ENCODE measurements at regions of chr1 and their contacts with region 1.

Region 1: DNA sequence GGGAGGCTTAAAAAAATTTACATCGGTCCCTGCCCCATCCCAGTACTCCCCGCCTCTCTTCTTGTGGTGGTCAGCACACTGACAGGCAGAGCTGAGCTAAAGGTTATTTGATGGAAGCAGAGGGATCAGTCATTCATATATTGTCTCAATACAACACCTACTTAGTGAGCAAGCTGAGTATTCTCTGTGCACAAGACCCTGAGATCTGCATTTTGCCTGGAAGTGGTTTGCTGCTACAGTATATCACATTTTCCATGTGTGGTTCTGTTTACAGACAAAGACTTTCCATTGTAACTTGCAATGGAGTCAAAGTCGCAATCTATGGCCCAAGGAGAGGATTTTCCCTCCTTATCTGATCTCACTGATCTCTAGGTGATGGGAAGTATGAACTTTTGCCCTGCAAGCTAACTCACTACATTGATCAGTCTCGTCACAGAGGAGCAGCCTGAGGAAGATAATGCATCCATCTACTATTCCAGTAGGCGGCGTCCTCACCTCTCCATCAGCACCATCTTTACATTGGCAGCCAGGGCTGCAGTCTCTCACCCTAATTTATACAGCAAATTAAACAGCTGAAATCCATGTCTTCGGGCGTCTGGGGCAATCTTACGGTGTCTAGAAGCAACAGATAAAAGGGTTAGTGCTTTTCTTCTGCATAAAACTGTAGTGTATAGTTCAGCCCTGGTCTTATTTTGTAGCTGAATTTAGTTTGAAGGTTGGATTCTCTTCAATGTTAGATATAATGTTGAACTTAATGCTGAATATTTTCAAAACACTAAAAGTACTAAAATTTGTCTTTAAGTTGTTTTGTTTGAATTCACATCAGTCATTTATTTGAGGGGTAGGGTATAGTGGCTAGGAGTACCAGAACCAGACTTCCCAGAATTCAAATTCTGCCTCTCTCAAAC is 3.2 kb upstream of the TRAF5 start:
- DNase-seq: no peak
- H3K4me3 ChIP-seq: no peak overlapping the region
- H3K27ac ChIP-seq: no peak overlapping the region
- H3K4me1 ChIP-seq: peaks cover 0 to 18% (median 13%) of the 10 kb centered on the region in 4 donors
- H3K27me3 ChIP-seq: no peaks in the 10 kb centered on the region
- CTCF ChIP-seq: peak; percentile 35 to 68 (median 64)
- EP300 ChIP-seq: no peak
- POLR2A ChIP-seq: no peak

Region 2: DNA sequence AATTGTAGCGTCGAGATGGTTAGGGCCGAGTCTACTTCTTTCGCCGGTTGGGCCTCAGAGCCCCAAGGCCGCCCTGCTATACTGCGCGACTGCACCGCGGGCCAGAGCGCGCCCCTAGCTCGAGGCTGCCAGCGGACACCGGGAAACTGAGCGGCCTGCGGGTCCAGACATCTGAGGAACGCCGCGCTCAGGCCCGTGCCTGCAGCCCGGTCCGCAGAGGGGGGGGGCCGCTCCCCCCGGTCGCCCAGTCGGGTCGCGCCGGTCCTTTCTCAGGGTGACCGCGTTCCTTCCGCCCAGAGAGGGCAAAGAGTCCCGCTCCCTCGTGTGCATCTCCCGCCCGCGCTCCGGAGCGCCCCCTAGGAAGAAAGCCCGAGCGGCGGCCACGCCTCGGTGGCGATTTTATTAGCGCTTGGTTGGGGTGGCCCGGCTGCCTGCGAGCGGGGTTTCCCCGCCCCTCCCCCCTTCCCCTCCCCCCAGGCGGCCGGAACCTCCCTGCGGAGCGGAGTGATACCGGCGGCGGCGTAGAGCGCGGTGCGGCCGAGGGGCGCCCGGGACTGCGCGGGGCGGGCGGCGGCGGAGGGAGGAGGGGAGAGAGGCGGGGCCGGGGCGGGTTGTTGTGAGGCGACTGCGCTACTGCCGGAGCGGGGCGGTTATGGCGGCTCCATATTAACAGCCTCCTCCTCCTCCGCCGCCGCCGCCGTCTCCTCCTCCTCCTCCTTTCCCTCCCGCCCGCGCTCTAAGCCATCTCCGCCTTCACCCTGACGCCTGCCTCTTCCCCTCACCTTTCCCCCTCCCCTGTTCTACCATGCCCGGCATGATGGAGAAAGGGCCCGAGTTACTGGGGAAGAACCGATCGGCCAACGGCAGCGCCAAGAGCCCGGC is 64.4 kb before region 1 on chr1 and contains the start of gene RCOR3:
- intact Hi-C with region 1: loop called (anchors 5 kb)
- DNase-seq: peak; percentile 97
- H3K4me3 ChIP-seq: peak within 1 kb of the TSS; percentile 75 to 99 (median 94)
- H3K27ac ChIP-seq: peak within 1 kb of the TSS; percentile 99 to 100 (median 100)
- H3K4me1 ChIP-seq: peaks cover 0 to 40% (median 32%) of the 10 kb centered on the region in 4 donors
- H3K27me3 ChIP-seq: no peaks in the 10 kb centered on the region
- CTCF ChIP-seq: peak in 1 of 4 experiments; percentile 47
- EP300 ChIP-seq: peak in 1 of 4 donors; percentile 12
- POLR2A ChIP-seq: peak; percentile 77 to 85
- total RNA-seq, gene RCOR3: 40.7 to 60.3 (median 55.7) TPM

Region 3: DNA sequence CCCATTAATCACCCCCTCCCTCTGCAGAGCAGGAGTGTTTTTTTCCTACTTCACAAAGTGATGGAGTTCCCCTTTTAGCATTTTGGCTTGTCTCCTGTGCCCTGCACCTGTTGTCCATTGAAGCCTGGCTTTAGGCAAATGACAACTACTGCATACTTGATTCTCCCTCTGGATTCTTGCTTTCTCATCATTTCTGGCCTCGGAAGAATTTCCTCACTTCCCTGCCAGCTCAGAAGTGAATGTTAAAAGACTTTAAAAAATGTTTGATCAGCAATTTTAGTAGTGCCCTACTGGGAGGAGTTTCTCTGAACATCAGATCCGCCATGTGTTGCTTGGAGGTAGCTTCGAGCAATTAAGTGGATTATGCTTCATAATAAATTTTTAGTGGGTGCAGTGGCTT is 36.2 kb before region 1 on chr1:
- intact Hi-C with region 1: no loop called
- DNase-seq: no peak
- H3K4me3 ChIP-seq: no peak overlapping the region
- H3K27ac ChIP-seq: no peak overlapping the region
- H3K4me1 ChIP-seq: peaks cover 0 to 5% (median 0%) of the 10 kb centered on the region in 4 donors
- H3K27me3 ChIP-seq: no peaks in the 10 kb centered on the region
- CTCF ChIP-seq: no peak
- EP300 ChIP-seq: no peak
- POLR2A ChIP-seq: no peak

Region 4: GRCh38 chr1:211382714-211383480 is 59.5 kb after region 1 on chr1:
- intact Hi-C with region 1: loop called (anchors 5 kb)
- DNase-seq: peak; percentile 96
- H3K4me3 ChIP-seq: peak overlapping the region; percentile 52 to 73 (median 64)
- H3K27ac ChIP-seq: peak overlapping the region; percentile 83 to 97 (median 90)
- H3K4me1 ChIP-seq: peaks cover 0 to 6% (median 0%) of the 10 kb centered on the region in 4 donors
- H3K27me3 ChIP-seq: no peaks in the 10 kb centered on the region
- CTCF ChIP-seq: no peak
- EP300 ChIP-seq: no peak
- POLR2A ChIP-seq: peak; percentile 82 to 95

Region 5: DNA sequence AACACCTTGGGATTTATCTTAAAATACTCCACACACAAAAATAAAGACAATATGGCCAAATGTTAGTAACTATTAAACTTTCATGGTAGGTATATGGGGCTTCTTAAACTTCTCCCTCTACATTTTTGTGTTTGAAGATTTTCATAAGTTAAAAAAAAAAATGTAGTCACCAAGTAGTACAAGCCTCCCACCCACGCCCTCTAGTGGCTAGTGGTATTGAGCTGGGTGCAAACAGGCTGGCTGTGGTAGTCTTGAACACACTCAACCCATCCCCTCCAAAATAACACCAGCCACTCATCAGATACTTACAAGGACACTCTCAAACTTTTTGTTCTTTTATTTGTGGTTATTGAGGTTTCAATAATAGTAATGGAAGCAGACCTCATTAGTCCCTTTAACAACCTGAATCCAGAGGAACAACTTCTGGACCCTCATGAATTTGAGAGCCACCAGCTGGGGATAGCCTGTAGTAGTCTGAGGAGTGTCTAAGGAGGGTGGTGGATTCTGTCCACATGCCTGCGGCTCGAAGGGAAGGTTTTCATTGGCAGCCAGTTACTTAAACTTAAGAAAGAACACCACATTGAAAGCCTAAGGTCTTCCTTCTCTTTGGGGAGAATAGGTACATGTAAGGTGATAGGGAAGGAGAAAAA is 152.9 kb after region 1 on chr1:
- intact Hi-C with region 1: loop called (anchors 10 kb)
- DNase-seq: peak; percentile 78
- H3K4me3 ChIP-seq: no peak overlapping the region
- H3K27ac ChIP-seq: no peak overlapping the region
- H3K4me1 ChIP-seq: peaks cover 0 to 12% (median 10%) of the 10 kb centered on the region in 4 donors
- H3K27me3 ChIP-seq: peaks cover 8 to 36% (median 18%) of the 10 kb centered on the region in 3 donors
- CTCF ChIP-seq: peak; percentile 4 to 72 (median 53)
- EP300 ChIP-seq: no peak
- POLR2A ChIP-seq: no peak

Region 6: DNA sequence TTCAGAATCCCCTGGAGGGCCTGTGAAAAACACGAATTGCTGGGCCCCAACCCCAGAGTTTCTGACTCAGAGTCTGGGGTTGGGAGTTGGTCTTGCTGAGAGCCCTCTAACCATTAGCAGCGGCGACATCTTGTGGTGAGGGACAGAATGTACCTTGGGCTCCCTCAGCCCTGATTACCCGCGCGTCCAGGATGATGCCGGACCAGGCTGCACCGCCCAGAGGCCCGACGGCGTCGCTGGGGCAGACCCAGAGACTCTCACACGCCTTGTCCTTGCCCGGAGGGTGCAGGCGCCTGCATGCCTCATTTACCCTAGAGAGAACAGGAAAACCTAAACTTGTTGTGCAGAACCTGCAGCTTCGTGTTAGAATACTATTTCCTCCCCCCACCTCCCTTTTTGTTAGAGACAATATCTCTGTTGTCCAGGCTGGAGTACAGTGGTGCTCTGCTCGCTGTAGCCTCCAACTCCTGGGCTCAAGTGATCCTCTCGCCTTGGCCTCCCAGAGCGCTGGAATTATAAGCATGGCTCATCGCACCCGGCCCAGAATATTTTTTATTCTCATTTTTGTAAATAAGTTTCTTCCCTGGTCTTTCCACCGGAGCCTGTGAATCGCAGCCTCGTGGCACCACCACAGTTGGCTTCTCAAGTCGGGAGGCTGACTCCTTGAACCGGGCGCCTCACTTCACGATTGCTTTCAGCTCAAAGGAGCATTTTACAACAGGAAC is 190.8 kb after region 1 on chr1:
- intact Hi-C with region 1: loop called (anchors 5 kb)
- DNase-seq: peak; percentile 91
- H3K4me3 ChIP-seq: no peak overlapping the region
- H3K27ac ChIP-seq: no peak overlapping the region
- H3K4me1 ChIP-seq: peaks cover 0 to 18% (median 13%) of the 10 kb centered on the region in 4 donors
- H3K27me3 ChIP-seq: no peaks in the 10 kb centered on the region
- CTCF ChIP-seq: peak; percentile 32 to 83 (median 66)
- EP300 ChIP-seq: no peak
- POLR2A ChIP-seq: no peak

Region 7: GRCh38 chr1:211654838-211655787 is 331.7 kb after region 1 on chr1:
- intact Hi-C with region 1: loop called (anchors 10 kb)
- DNase-seq: peak; percentile 94
- H3K4me3 ChIP-seq: peak overlapping the region in 1 of 4 donors; percentile 4
- H3K27ac ChIP-seq: no peak overlapping the region
- H3K4me1 ChIP-seq: peaks cover 0 to 4% (median 0%) of the 10 kb centered on the region in 4 donors
- H3K27me3 ChIP-seq: no peaks in the 10 kb centered on the region
- CTCF ChIP-seq: peak; percentile 87 to 92 (median 88)
- EP300 ChIP-seq: no peak
- POLR2A ChIP-seq: no peak